Activated CD4-positive, alpha-beta memory T cell treated with anti-CD3 and anti-CD28 coated beads, Interleukin-2, amount 10 ng/mL, durations not matched to agents 7 days and 5 days (primary cell): ENCODE measurements at regions of chr10 and their contacts with region 1.

Region 1: DNA sequence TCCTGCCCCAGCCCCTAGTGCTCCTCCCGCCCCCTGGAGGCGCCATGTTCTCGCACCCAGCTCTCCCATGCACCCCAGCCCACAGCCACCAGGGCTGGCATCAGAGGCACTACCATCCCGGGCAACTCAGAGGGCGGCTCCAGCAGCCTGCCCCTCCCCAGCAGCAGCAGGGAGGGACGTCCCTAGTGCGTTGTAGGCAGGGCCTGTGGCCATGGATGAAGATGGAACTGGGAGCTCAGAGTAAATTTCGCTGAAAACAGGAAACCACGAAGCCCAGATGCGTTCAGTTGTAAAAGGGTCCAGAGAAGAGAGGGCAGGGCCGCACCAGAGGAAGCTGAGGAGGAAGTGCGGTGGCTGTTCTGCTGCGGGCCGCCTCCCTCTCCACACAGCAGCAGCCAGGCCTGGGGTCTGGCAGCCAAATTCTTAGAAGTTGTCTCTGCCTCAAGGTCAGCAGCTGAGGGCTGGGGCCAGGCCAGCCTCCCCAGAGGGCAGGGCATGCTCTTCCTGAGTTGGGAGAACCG is 24.6 kb downstream of the VSIR start:
- DNase-seq: peak; percentile 93
- H3K4me3 Mint-ChIP-seq: peak overlapping the region; percentile 43
- H3K27ac Mint-ChIP-seq: peak overlapping the region; percentile 95
- H3K4me1 Mint-ChIP-seq: peaks cover 97% of the 10 kb centered on the region
- H3K27me3 Mint-ChIP-seq: no peaks in the 10 kb centered on the region

Region 2: GRCh38 chr10:71766702-71767419 is 18.1 kb after region 1 on chr10:
- CTCF ChIA-PET with region 1: interaction called, 20 read pairs
- POLR2A ChIA-PET with region 1: interaction called, 65 read pairs
- DNase-seq: peak; percentile 67
- H3K4me3 Mint-ChIP-seq: peak overlapping the region; percentile 57
- H3K27ac Mint-ChIP-seq: peak overlapping the region; percentile 91
- H3K4me1 Mint-ChIP-seq: peaks cover 85% of the 10 kb centered on the region
- H3K27me3 Mint-ChIP-seq: no peaks in the 10 kb centered on the region